Activated CD8-positive, alpha-beta T cell treated with anti-CD3 and anti-CD28 coated beads for 36 hours (primary cell): ENCODE measurements at regions of chr17 and their contacts with region 1.

Region 1: DNA sequence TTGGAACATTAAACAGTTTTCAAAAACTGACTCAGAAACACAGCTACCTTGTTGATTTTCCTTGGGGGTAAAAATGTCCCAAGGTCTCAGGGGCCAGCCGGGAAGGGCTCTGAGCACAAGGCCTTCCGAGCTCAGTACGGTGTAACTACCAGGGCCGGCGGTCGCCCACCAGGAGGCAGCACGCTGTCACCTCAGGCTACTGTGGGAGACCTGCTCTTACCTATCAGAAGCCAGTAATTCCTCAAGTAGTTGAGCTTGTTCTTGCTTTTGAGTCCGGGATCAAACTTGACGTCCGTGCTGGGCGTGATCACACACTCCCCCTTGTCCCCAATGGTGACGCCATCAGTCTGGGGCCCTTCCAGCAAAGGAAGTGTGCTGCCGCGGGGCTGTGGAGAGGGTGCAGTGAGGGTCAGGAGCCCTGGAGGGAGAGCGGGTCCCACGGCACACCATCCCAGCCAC is 43.4 kb upstream of the ICAM2 start:
- DNase-seq: peak; percentile 78
- ATAC-seq: peak; percentile 45
- H3K4me3 Mint-ChIP-seq: peak overlapping the region; percentile 54
- H3K27ac Mint-ChIP-seq: peak overlapping the region; percentile 78
- H3K4me1 Mint-ChIP-seq: peaks cover 73% of the 10 kb centered on the region
- H3K27me3 Mint-ChIP-seq: no peaks in the 10 kb centered on the region
- CTCF ChIP-seq: peak; percentile 71

Region 2: GRCh38 chr17:64051153-64051552 is 12.6 kb before region 1 on chr17:
- CTCF ChIA-PET with region 1: interaction called, 11 read pairs
- POLR2A ChIA-PET with region 1: interaction called, 4 read pairs
- intact Hi-C with region 1: no loop called
- DNase-seq: no peak
- ATAC-seq: peak; percentile 95
- H3K4me3 Mint-ChIP-seq: no peak overlapping the region
- H3K27ac Mint-ChIP-seq: peak overlapping the region; percentile 81
- H3K4me1 Mint-ChIP-seq: peaks cover 29% of the 10 kb centered on the region
- H3K27me3 Mint-ChIP-seq: no peaks in the 10 kb centered on the region
- CTCF ChIP-seq: no peak

Region 3: GRCh38 chr17:64073771-64074703 is 10.2 kb after region 1 on chr17:
- CTCF ChIA-PET with region 1: interaction called, 29 read pairs
- POLR2A ChIA-PET with region 1: interaction called, 12 read pairs
- intact Hi-C with region 1: no loop called
- DNase-seq: no peak
- ATAC-seq: no peak
- H3K4me3 Mint-ChIP-seq: no peak overlapping the region
- H3K27ac Mint-ChIP-seq: no peak overlapping the region
- H3K4me1 Mint-ChIP-seq: peaks cover 14% of the 10 kb centered on the region
- H3K27me3 Mint-ChIP-seq: no peaks in the 10 kb centered on the region
- CTCF ChIP-seq: no peak

Region 4: DNA sequence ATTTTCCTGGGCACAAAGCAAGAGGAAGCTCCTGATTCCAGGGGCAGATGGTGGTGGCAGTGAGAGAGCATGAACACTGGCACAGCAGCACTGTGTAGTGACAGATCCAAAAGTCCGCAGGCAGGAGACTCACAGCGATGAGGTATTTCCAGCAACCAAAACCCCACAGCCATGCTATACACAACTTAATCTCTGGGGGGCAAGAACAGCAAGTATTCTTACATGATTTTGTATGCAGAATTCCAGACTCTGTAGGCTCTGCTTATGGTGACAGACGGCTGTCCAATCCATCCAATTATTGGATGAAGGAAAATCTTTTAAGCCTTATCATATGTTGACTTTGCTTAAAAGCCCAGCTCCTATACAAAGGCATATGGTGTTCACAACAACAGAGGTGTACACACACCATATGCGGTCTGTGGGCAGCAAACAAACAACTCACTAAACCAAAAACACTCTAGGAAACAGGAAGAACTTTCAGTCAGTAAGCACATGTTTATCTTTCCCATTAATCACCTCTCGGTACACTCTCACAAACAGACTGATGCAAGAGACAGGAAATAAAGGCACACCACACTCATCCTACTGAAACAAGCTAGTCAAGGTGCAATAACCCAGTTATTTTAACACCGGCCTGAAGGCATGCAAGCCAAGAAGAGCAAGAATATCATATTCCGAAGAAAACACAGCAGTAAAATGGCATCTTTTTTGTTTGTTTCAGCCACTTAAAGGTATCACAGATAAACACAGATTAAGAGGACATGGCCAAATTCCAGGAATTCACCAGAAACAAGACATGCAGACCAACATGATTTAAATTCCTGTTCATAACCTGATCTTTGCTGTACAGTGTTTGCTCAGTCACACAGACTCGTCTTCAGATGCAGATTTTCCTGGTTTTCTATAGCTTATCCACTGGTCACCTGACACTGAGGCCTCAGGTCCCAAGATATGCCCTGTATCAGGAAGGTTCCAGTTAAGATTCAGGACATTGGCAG is 18.3 kb after region 1 on chr17:
- CTCF ChIA-PET with region 1: interaction called, 29 read pairs
- POLR2A ChIA-PET with region 1: interaction called, 12 read pairs
- intact Hi-C with region 1: no loop called
- DNase-seq: peak; percentile 63
- ATAC-seq: peak; percentile 88
- H3K4me3 Mint-ChIP-seq: peak overlapping the region; percentile 45
- H3K27ac Mint-ChIP-seq: no peak overlapping the region
- H3K4me1 Mint-ChIP-seq: peaks cover 20% of the 10 kb centered on the region
- H3K27me3 Mint-ChIP-seq: no peaks in the 10 kb centered on the region
- CTCF ChIP-seq: peak; percentile 36

Region 5: DNA sequence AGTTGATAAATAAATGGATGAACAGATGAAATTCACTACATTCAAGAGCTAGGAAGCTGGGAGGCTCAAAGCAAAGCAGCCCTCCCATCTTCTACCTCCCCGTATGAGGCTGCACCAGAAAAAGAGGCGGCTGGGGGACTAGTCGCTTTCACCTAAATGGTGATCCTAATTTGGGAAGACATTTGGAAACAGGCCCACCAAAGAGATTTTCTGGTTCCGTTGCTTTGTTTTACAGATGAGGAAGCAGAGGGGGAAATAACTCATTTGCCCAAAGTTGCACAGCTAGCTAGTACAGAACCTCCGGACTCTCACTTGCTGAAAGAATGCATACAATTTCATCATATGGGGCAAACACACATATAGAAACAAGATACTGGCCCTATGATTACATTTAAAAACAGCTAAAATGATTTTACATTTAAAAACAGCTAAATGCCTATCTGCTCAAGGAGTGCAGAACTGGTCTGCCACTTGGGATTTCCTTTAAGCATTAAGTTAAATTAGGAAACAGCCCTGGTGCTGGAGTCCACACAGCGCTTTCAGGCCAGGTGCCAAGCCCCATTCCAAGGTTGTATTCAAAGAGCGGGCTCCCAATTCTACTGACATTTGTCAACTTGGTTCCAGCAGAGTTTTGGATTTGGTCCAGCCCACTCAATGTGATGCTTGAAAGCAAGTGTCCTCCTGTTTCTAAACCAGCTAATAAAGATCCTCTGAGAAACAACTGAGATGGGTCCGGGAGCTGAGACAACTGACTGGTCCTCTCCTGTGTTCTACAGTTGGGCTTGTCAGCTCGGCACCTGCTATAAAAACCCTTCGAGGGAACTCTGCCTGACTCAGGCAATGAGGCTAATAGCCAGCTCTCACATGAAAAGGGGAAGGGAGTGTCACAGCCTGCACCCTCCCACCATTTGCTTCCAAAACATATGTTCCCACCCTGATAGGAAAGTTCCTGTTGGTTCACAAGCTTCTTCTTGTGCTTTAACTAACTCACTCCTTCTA is 54.5 kb after region 1 on chr17:
- CTCF ChIA-PET with region 1: interaction called, 14 read pairs
- POLR2A ChIA-PET with region 1: interaction called, 3 read pairs
- intact Hi-C with region 1: no loop called
- DNase-seq: no peak
- ATAC-seq: no peak
- H3K4me3 Mint-ChIP-seq: no peak overlapping the region
- H3K27ac Mint-ChIP-seq: peak overlapping the region; percentile 82
- H3K4me1 Mint-ChIP-seq: peaks cover 75% of the 10 kb centered on the region
- H3K27me3 Mint-ChIP-seq: no peaks in the 10 kb centered on the region
- CTCF ChIP-seq: no peak

Region 6: DNA sequence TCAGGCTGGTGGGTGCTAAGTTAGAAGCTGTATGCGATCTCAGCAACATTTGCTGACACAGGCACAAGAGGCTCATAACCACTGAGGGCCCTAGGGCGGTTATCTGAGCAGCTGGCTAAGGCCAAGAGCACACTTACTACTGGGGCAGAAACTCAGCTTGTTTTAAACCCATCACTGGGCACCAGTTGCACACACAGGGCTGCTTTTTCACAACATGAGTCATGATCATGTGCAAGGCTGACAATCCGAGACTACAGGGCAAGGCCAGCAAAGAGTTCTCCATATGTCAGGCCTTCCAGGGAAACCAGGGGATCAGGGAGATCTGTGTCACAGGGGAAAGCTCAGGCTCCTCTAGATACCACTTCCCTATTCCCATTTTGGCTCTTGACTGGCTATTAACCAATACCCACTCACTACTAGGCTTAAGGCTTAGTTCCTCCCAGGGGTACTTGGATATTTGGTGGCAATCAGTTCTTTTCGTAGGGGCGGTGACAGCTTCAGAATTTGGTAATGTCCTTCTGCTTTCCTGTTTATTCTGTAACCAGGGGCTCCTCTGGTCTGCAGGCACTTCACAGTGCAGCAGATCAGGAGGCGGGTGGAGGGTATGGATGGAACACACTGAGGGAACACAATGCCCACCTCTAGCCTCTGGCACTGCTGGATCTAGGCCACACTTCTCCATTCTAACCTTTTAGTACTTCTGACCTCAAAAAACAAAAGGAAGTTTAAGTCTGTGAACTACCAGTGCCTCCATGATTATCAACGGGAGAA is 111.1 kb after region 1 on chr17:
- CTCF ChIA-PET with region 1: no interaction called
- POLR2A ChIA-PET with region 1: no interaction called
- intact Hi-C with region 1: no loop called
- DNase-seq: no peak
- ATAC-seq: no peak
- H3K4me3 Mint-ChIP-seq: no peak overlapping the region
- H3K27ac Mint-ChIP-seq: no peak overlapping the region
- H3K4me1 Mint-ChIP-seq: no peaks in the 10 kb centered on the region
- H3K27me3 Mint-ChIP-seq: no peaks in the 10 kb centered on the region
- CTCF ChIP-seq: no peak

Region 7: DNA sequence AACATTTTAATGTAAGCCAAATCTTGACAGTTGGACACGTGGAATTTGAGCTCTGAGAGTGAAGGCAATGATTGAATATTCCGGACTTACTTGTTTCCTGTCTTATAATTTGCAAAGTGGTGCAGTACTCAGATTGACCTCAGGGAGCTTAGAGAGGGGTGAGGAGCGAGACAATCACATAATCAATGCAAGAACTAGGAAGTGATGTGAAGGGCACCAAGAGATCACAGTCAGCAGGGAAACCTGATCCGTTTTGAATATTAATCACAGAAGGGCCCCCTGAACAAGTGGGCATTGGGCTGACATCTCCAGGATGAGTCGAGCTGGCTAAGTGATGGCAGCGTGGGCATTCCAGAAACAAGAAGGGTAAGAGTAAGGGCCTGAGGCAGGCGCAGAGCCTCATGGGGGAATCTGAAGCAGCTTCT is 173.1 kb after region 1 on chr17:
- CTCF ChIA-PET with region 1: no interaction called
- POLR2A ChIA-PET with region 1: no interaction called
- intact Hi-C with region 1: no loop called
- DNase-seq: no peak
- ATAC-seq: no peak
- H3K4me3 Mint-ChIP-seq: no peak overlapping the region
- H3K27ac Mint-ChIP-seq: no peak overlapping the region
- H3K4me1 Mint-ChIP-seq: peaks cover 38% of the 10 kb centered on the region
- H3K27me3 Mint-ChIP-seq: no peaks in the 10 kb centered on the region
- CTCF ChIP-seq: peak; percentile 27